Upper lobe of right lung (tissue), 1 donor: ENCODE measurements at regions of chr17 and their contacts with region 1.

Region 1: GRCh38 chr17:72236915-72237633 is 116.3 kb downstream of the SOX9 start:
- DNase-seq: no peak
- ATAC-seq: no peak
- H3K4me3 ChIP-seq: no peak overlapping the region
- H3K27ac ChIP-seq: no peak overlapping the region
- H3K4me1 ChIP-seq: no peaks in the 10 kb centered on the region
- H3K27me3 ChIP-seq: no peaks in the 10 kb centered on the region
- CTCF ChIP-seq: no peak

Region 2: GRCh38 chr17:71494062-71494855 is 742.8 kb before region 1 on chr17:
- intact Hi-C with region 1: loop called (anchors 10 kb)
- DNase-seq: no peak
- ATAC-seq: no peak
- H3K4me3 ChIP-seq: no peak overlapping the region
- H3K27ac ChIP-seq: no peak overlapping the region
- H3K4me1 ChIP-seq: no peaks in the 10 kb centered on the region
- H3K27me3 ChIP-seq: no peaks in the 10 kb centered on the region
- CTCF ChIP-seq: no peak